ENCODE measurements at regions of chr16 and their contacts with region 1.

Region 1: GRCh38 chr16:3457434-3458252 is 14.2 kb downstream of the NAA60 start:
- DNase-seq: peak; percentile 74 to 97 (median 90)
- ATAC-seq: peak; percentile 86
- H3K4me3 ChIP-seq: peak overlapping the region; percentile 83
- H3K4me3 Mint-ChIP-seq: peak overlapping the region; percentile 76
- H3K27ac ChIP-seq: peak overlapping the region; percentile 84 to 90
- H3K27ac Mint-ChIP-seq: peak overlapping the region; percentile 83
- H3K4me1 ChIP-seq: peaks cover 46% of the 10 kb centered on the region
- H3K4me1 Mint-ChIP-seq: peaks cover 59% of the 10 kb centered on the region
- H3K27me3 ChIP-seq: no peaks in the 10 kb centered on the region
- H3K27me3 Mint-ChIP-seq: no peaks in the 10 kb centered on the region
- CTCF ChIP-seq: peak; percentile 39

Region 2: GRCh38 chr16:3134564-3135417 is 322.9 kb before region 1 on chr16 and contains the start of gene ZNF213:
- CTCF ChIA-PET with region 1: no interaction called
- POLR2A ChIA-PET with region 1: interaction called, 9 read pairs
- intact Hi-C with region 1: loop called in 1 of 2 experiments (anchors 5 kb)
- DNase-seq: peak; percentile 79 to 99 (median 89)
- ATAC-seq: peak; percentile 97
- H3K4me3 ChIP-seq: peak within 1 kb of the TSS; percentile 84
- H3K4me3 Mint-ChIP-seq: peak within 1 kb of the TSS; percentile 99
- H3K27ac ChIP-seq: peak within 1 kb of the TSS; percentile 91 to 92
- H3K27ac Mint-ChIP-seq: peak within 1 kb of the TSS; percentile 94
- H3K4me1 ChIP-seq: peaks cover 29% of the 10 kb centered on the region
- H3K4me1 Mint-ChIP-seq: peaks cover 38% of the 10 kb centered on the region
- H3K27me3 ChIP-seq: no peaks in the 10 kb centered on the region
- H3K27me3 Mint-ChIP-seq: no peaks in the 10 kb centered on the region
- CTCF ChIP-seq: no peak
- total RNA-seq, gene ZNF213: 1.6 to 2.2 TPM

Region 3: DNA sequence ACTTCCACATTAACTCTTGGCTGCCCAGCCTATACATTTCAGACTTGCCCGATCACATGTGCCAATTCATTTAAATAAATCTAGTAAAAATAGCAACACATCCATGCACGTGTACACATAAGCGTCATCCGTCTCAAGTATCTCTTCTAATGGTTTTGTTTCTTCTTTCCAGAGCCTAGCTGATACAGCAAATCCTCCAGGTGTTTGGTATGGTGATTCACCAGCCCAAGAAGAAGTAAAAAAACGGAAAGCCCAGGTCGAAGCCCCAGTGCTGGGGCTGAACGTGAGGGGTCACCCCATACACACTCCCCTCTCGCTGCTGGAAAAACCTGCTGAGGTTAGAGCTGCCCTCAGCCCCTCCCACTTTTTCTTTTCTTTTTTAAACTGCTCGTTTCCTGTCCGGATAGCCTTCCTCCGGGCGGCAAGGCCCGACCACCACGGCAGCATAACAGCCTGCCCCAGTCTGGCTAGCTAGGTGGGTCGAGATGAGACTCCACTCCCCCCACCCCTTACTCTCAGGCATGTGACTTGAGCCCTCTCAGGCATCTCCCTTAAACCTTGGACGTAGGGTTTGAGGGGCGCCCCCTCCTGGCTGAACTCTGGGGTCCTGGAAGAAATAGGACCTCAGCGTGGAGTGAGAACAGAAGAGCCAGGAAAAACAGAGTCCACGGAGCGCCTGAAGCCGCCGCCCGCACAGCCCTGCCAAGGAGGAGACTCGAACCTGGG is 283.6 kb before region 1 on chr16:
- CTCF ChIA-PET with region 1: no interaction called
- POLR2A ChIA-PET with region 1: no interaction called
- intact Hi-C with region 1: loop called (anchors 5 kb)
- DNase-seq: peak in 1 of 14 experiments; percentile 52
- ATAC-seq: peak; percentile 11
- H3K4me3 ChIP-seq: no peak overlapping the region
- H3K4me3 Mint-ChIP-seq: peak overlapping the region; percentile 0
- H3K27ac ChIP-seq: no peak overlapping the region
- H3K27ac Mint-ChIP-seq: no peak overlapping the region
- H3K4me1 ChIP-seq: peaks cover 44% of the 10 kb centered on the region
- H3K4me1 Mint-ChIP-seq: peaks cover 44% of the 10 kb centered on the region
- H3K27me3 ChIP-seq: peaks cover 69 to 81% of the 10 kb centered on the region in 2 experiments
- H3K27me3 Mint-ChIP-seq: peaks cover 70% of the 10 kb centered on the region
- CTCF ChIP-seq: no peak

Region 4: GRCh38 chr16:3264137-3265036 is 193.3 kb before region 1 on chr16:
- CTCF ChIA-PET with region 1: interaction called, 3 read pairs
- POLR2A ChIA-PET with region 1: interaction called, 3 read pairs
- intact Hi-C with region 1: loop called in 1 of 2 experiments (anchors 5 kb)
- DNase-seq: peak; percentile 92 to 98 (median 96)
- ATAC-seq: peak; percentile 85
- H3K4me3 ChIP-seq: peak overlapping the region; percentile 91
- H3K4me3 Mint-ChIP-seq: peak overlapping the region; percentile 92
- H3K27ac ChIP-seq: peak overlapping the region; percentile 95 to 96
- H3K27ac Mint-ChIP-seq: peak overlapping the region; percentile 96
- H3K4me1 ChIP-seq: peaks cover 47% of the 10 kb centered on the region
- H3K4me1 Mint-ChIP-seq: peaks cover 31% of the 10 kb centered on the region
- H3K27me3 ChIP-seq: no peaks in the 10 kb centered on the region
- H3K27me3 Mint-ChIP-seq: no peaks in the 10 kb centered on the region
- CTCF ChIP-seq: no peak

Region 5: DNA sequence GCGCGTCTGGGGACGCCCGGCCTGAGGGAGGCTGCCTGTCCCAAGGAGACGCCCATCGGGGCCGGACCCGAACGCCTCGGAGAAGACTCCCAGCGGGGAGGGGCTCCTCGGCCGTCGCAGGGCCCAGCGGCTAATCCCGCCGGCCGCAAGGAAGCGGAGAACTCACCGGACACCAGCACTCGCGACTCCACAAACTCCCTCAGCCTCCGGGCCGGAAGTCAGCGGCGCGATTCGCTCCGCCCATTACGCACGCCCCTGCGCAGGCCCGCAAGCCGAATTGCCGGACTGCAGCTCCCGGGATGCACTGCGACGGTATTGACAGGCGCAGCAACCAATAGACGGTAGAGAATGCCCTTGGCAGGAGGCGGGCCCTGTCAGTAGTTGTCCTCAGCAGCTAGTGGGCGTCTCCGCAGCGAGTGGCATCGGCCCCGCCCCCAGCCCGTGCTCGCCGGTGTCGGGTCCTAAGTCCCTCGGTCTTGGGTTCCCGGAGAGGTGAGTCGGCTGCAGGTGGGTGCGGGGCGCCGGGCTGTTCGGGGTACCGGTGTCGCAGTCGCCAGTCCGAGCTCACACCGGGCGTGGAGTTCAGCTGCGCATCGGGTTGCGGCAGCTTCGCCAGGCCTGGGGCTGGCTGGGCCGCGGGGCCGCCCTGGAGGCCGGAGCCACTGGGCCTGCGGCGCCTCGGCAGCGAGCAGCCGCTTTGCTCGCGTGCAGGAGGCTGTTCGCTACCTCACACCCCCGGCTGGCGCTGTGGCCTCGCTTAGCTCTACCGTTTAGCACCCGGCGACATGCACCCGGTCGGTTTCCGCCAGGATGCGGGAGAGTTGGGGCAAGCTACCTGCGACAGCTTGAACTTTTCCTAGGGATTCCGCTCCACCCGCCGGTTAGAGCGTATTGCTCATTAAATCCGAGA is 56.6 kb before region 1 on chr16 and contains the starts of genes ZNF174 and ZSCAN32:
- CTCF ChIA-PET with region 1: interaction called, 17 read pairs
- POLR2A ChIA-PET with region 1: interaction called, 41 read pairs
- intact Hi-C with region 1: loop called (anchors 1 to 2 kb)
- DNase-seq: peak; percentile 96 to 99 (median 98)
- ATAC-seq: peak; percentile 97
- H3K4me3 ChIP-seq: peak within 1 kb of the TSS; percentile 83
- H3K4me3 Mint-ChIP-seq: peak within 1 kb of the TSS; percentile 95
- H3K27ac ChIP-seq: peak within 1 kb of the TSS; percentile 71 to 73
- H3K27ac Mint-ChIP-seq: peak within 1 kb of the TSS; percentile 88
- H3K4me1 ChIP-seq: peaks cover 49% of the 10 kb centered on the region
- H3K4me1 Mint-ChIP-seq: peaks cover 67% of the 10 kb centered on the region
- H3K27me3 ChIP-seq: no peaks in the 10 kb centered on the region
- H3K27me3 Mint-ChIP-seq: no peaks in the 10 kb centered on the region
- CTCF ChIP-seq: no peak
- total RNA-seq, gene ZNF174: 5.6 to 5.7 TPM
- total RNA-seq, gene ZSCAN32: 4.8 to 5.4 TPM

Region 6: GRCh38 chr16:3503523-3503922 is 45.9 kb after region 1 on chr16:
- CTCF ChIA-PET with region 1: interaction called, 12 read pairs
- POLR2A ChIA-PET with region 1: interaction called, 6 read pairs
- intact Hi-C with region 1: loop called (anchors 1 kb)
- DNase-seq: peak; percentile 23 to 89 (median 62)
- ATAC-seq: peak; percentile 55
- H3K4me3 ChIP-seq: peak overlapping the region; percentile 25
- H3K4me3 Mint-ChIP-seq: peak overlapping the region; percentile 83
- H3K27ac ChIP-seq: peak overlapping the region; percentile 42 to 66
- H3K27ac Mint-ChIP-seq: peak overlapping the region; percentile 95
- H3K4me1 ChIP-seq: peaks cover 60% of the 10 kb centered on the region
- H3K4me1 Mint-ChIP-seq: peaks cover 72% of the 10 kb centered on the region
- H3K27me3 ChIP-seq: no peaks in the 10 kb centered on the region
- H3K27me3 Mint-ChIP-seq: no peaks in the 10 kb centered on the region
- CTCF ChIP-seq: no peak

Region 7: GRCh38 chr16:3771502-3771901 is 313.9 kb after region 1 on chr16:
- CTCF ChIA-PET with region 1: no interaction called
- POLR2A ChIA-PET with region 1: no interaction called
- intact Hi-C with region 1: no loop called
- DNase-seq: no peak
- ATAC-seq: no peak
- H3K4me3 ChIP-seq: no peak overlapping the region
- H3K4me3 Mint-ChIP-seq: no peak overlapping the region
- H3K27ac ChIP-seq: no peak overlapping the region
- H3K27ac Mint-ChIP-seq: no peak overlapping the region
- H3K4me1 ChIP-seq: no peaks in the 10 kb centered on the region
- H3K4me1 Mint-ChIP-seq: no peaks in the 10 kb centered on the region
- H3K27me3 ChIP-seq: no peaks in the 10 kb centered on the region
- H3K27me3 Mint-ChIP-seq: no peaks in the 10 kb centered on the region
- CTCF ChIP-seq: no peak

Measured in CD4-positive, alpha-beta T cell (primary cell).